SK-N-SH (cell line): ENCODE measurements at regions of chr7 and their contacts with region 1.

Region 1: GRCh38 chr7:148940702-148941597 is 56.9 kb upstream of the EZH2 start:
- DNase-seq: peak; percentile 88
- H3K4me3 ChIP-seq: peak overlapping the region; percentile 65 to 83
- H3K27ac ChIP-seq: peak overlapping the region; percentile 76 to 91
- H3K4me1 ChIP-seq: peaks cover 0 to 6% of the 10 kb centered on the region in 2 experiments; a peak in 2 of 4 replicates
- H3K27me3 ChIP-seq: no peaks in the 10 kb centered on the region
- CTCF ChIP-seq: no peak
- EP300 ChIP-seq: peak in 1 of 2 experiments; percentile 59; a peak in 1 of 4 replicates
- RAD21 ChIP-seq: 0 out of 2 replicates have a peak, but pooled peaks have one; percentile 10

Region 2: DNA sequence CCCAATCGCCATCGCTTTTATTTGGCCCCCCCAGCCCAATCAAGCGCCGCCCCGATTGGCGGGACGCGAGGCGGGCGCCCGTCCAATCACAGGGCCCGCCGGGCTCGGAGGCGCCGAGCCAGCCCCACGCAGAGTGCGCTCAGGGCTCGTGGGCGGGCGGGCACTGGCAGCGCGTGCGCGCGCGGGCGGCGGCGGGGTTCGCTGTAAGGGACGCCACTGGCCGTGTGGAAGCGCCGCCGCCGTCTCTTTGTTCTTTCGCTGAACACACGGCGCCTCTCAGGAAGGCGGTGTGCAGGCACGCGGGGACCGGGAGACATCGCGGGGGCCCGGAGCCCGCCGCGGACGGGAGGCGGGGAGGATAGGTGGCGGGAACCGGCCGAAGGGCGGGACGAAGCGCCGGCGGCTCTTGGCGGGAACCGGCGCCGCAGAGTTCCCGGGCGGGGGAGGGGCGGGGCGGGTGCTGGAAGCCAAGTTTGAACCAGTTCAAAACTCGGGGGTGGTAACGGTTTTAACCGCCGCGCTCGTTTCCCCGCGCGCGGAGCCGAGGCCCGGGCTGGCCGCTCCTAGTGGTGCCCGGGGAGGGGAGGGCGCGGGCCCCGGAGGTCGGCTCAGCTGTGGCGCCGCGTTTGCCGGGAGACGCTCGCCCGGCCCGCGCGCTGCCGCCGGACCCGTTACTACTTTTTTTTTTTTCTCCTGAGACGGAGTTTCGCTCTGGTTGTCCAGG is 56.5 kb before region 1 on chr7:
- CTCF ChIA-PET with region 1: interaction called, 12 read pairs
- POLR2A ChIA-PET with region 1: interaction called, 4 read pairs
- DNase-seq: peak; percentile 100
- H3K4me3 ChIP-seq: peak overlapping the region; percentile 75 to 92
- H3K27ac ChIP-seq: peak overlapping the region; percentile 75 to 94
- H3K4me1 ChIP-seq: peaks cover 0 to 8% of the 10 kb centered on the region in 2 experiments; a peak in 2 of 4 replicates
- H3K27me3 ChIP-seq: no peaks in the 10 kb centered on the region
- CTCF ChIP-seq: no peak
- EP300 ChIP-seq: peak in 1 of 2 experiments; percentile 73; a peak in 1 of 4 replicates
- RAD21 ChIP-seq: no peak

Region 3: GRCh38 chr7:148921806-148922205 is 19.1 kb before region 1 on chr7:
- CTCF ChIA-PET with region 1: interaction called, 14 read pairs
- POLR2A ChIA-PET with region 1: interaction called, 4 read pairs
- DNase-seq: no peak
- H3K4me3 ChIP-seq: no peak overlapping the region
- H3K27ac ChIP-seq: no peak overlapping the region
- H3K4me1 ChIP-seq: no peaks in the 10 kb centered on the region
- H3K27me3 ChIP-seq: no peaks in the 10 kb centered on the region
- CTCF ChIP-seq: no peak
- EP300 ChIP-seq: no peak
- RAD21 ChIP-seq: no peak